Heart left ventricle (tissue), 16 donors: ENCODE measurements at regions of chr16 and their contacts with region 1.

Region 1: DNA sequence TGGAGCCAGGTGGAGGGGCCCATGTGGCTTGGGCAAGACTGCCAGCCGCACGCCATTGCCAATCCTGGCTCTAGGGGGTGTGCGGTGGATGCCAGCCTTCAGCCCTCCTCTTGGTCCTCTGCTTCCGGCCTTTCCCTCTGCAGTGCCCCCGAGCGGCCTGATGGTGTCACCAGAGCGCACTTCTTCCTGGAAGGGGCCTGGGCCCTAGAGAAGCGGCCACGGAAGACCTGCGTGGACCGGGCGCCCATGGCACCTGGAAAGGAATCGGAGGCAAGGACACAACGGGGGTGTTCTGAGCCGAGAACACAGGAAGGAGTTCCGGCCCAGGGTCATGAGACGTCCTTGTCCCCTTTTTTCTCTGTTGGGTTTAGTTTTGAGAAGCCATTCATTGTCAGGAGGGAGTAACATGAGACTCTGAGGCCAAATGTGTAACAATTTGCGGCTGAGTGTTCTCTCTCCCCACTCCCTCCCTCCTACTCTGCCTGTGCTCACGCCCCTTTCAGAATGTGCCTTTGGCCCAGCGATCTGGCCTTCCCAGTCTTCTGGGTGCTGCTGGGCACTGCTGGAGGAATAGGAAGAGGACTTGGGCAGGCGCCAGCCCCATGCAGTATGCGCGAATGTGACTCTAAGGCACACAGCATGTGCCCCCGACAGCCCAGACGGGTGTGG is 92.8 kb downstream of the IRX3 start:
- DNase-seq: peak; percentile 77 to 90 (median 84)
- ATAC-seq: peak; percentile 85 to 90 (median 89)
- H3K4me3 ChIP-seq: peak overlapping the region in 10 of 12 donors; percentile 5 to 52 (median 32)
- H3K27ac ChIP-seq: peak overlapping the region; percentile 52 to 97 (median 84)
- H3K4me1 ChIP-seq: peaks cover 0 to 19% (median 8%) of the 10 kb centered on the region in 12 donors
- H3K27me3 ChIP-seq: no peaks in the 10 kb centered on the region
- CTCF ChIP-seq: peak; percentile 75 to 95 (median 87)
- POLR2A ChIP-seq: no peak

Region 2: DNA sequence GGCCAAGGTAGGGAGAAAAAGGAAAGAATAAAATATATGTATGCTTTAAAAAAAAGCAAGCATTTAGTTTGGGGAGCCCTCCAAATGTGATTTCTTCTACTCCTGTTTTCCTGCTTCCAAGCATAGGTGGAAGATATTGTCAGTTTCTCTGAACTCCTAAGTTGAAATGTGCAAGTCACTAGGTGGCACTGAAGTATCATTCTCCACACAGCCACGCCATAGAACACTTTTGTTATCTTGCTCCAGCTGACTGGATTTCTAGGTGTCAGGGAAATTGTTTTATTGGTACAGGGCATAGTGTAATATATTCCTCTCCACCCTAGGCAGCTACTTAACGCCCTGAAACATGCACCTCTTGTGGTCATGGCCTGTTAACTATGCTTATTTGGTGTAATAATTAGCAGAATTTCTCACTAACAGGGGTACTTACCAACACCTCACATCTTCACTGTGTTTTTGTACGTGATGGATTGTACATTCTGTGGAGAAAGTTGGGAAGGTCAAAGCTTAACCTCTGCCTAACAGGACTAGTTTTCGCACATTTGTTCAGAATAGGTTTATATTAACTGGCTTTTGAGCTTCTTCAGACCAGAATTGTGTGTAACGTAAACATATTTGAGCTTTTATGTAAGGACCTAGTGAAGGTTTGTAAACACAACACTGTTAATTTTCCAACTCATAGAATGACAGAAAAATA is 420.5 kb before region 1 on chr16:
- intact Hi-C with region 1: loop called in 3 of 10 experiments (anchors 10 kb)
- DNase-seq: peak in 4 of 5 donors; percentile 21 to 35 (median 26)
- ATAC-seq: peak; percentile 84 to 94 (median 89)
- H3K4me3 ChIP-seq: no peak overlapping the region
- H3K27ac ChIP-seq: peak overlapping the region in 10 of 12 donors; percentile 17 to 66 (median 46)
- H3K4me1 ChIP-seq: peaks cover 0 to 85% (median 37%) of the 10 kb centered on the region in 12 donors
- H3K27me3 ChIP-seq: no peaks in the 10 kb centered on the region
- CTCF ChIP-seq: peak; percentile 38 to 70 (median 60)
- POLR2A ChIP-seq: no peak

Region 3: DNA sequence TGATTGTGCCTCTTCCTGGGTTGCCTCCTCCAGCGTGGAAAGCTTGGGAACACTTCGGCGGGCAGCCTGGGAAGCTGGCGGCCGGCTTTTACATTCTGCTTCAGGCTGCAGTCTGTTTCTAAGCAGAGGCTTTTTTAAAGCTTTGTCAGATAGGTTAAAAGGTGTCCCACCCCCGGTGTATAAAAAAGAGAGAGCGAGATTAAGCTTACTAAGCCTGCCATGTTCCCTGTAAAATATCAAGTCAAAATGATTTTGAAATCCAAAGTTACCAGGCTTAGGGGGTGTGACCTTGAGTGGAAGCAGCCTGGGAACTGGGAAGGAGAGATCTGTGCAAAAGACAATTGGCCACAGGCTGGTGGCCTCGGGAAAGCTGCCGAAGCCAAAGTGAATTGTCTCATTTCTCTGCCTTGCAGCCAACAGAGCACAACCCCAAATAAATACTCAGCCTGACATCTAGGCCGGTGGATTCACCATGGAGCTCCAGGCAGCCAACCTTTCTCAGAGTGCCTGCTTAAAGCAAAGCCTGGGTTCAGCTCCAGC is 235.4 kb before region 1 on chr16:
- intact Hi-C with region 1: loop called in 1 of 10 experiments (anchors 5 kb)
- DNase-seq: no peak
- ATAC-seq: peak in 3 of 4 donors; percentile 44 to 53 (median 52)
- H3K4me3 ChIP-seq: no peak overlapping the region
- H3K27ac ChIP-seq: peak overlapping the region in 10 of 12 donors; percentile 9 to 54 (median 36)
- H3K4me1 ChIP-seq: peaks cover 0 to 26% (median 3%) of the 10 kb centered on the region in 12 donors
- H3K27me3 ChIP-seq: no peaks in the 10 kb centered on the region
- CTCF ChIP-seq: no peak
- POLR2A ChIP-seq: no peak

Region 4: DNA sequence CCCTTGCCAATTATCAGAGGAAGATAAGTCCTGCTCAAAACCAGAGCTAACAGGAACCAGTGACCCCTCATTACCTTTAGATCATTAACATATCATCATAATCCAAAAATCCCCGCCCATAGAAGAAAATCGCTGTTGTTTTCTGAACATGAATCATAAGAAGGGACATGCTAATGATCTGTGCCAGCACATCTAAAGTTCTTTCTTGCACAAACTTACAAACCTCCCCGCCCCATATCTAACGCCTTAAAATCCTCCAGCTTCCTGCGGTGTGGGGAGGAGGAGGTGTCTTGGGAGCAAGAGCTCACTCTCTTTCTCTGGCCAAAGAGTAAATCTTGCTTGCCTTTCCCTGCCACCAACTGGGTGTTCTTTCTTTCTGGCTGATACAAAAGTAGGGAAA is 14.4 kb after region 1 on chr16:
- intact Hi-C with region 1: no loop called
- DNase-seq: no peak
- ATAC-seq: peak in 2 of 4 donors; percentile 29 to 43
- H3K4me3 ChIP-seq: no peak overlapping the region
- H3K27ac ChIP-seq: no peak overlapping the region
- H3K4me1 ChIP-seq: peaks cover 0 to 2% (median 0%) of the 10 kb centered on the region in 12 donors
- H3K27me3 ChIP-seq: no peaks in the 10 kb centered on the region
- CTCF ChIP-seq: no peak
- POLR2A ChIP-seq: no peak

Region 5: DNA sequence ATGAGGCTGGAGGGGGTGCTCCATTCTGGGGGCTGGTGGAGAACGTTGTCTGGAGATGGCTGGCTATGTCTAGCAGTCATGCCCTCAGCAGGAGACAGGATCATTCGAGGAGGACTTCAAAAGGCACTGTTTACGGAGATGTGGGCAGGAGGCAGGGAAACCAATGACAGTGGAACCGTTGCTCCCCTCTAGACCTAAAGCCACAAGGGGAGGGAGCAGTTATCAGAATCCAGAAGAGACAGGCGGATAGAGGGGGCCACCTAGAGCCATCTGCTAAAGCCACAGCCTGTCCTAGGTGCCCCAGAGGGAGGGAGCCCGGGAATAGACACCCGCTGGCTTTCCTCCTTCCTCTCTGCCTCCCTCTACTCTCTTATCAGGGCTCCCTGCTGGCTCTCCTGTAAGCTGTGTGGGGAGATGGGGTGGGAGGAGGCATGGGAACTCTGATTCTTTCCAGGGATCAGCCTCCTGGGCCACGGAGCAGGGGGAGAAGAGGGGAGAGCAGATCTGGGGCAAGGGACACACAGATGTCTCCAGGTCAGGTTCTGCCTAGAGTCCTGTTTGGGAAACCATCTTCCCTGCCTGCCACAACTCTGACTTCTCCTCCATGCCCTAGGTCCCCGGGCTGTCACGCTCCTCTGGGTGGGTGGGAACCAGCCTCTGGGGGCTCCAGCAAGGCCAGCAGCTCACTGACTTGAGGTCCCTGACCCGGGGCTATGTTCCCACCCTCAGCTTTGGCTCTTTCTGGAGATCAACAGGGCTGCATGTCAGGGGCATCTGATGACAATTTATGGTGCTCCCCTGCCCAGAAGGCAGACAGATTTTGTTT is 50.5 kb after region 1 on chr16:
- intact Hi-C with region 1: no loop called
- DNase-seq: no peak
- ATAC-seq: peak in 2 of 4 donors; percentile 34 to 43
- H3K4me3 ChIP-seq: no peak overlapping the region
- H3K27ac ChIP-seq: no peak overlapping the region
- H3K4me1 ChIP-seq: peaks cover 0 to 26% (median 18%) of the 10 kb centered on the region in 12 donors
- H3K27me3 ChIP-seq: no peaks in the 10 kb centered on the region
- CTCF ChIP-seq: peak in 2 of 12 donors; percentile 8 to 13
- POLR2A ChIP-seq: no peak

Region 6: DNA sequence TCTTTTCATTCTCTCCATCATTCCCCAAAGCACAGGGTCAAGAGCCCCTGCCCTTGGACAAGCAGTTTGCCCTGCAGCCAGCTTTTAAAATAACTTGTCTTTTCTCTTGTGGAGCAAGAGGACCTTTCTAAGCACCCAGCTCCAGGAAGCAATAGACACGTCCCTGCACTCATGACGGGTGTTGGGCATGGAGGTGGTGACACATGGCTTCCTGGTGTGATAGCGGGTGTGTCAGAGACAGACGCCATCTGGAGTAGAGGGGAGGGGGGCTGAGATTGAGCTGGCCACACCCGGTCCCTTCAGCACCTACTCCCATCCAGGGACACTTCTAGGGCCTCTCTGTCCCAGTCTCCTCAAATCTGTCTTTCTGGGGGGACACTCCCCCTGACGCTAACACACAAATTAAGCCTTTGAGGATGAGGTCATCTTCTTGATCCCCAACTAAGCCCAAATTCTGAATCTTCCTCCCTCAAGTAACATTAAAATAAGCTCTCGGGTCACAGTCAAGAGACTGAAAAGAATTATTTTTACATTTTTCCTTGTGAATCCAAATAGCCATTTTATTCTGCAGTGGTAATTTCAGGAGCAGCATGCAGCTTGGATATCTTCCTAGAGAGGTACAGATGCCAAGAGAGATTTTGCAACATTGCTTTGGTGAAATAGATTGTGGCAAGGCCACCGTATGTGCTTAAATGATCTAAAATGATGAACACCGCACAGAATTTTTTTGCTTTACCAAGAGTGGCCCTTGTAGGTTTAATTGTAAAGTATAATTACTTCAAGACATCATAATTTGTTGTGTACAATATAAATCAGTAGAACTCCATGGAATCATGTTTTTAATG is 309.4 kb after region 1 on chr16:
- intact Hi-C with region 1: loop called in 1 of 10 experiments (anchors 5 kb)
- DNase-seq: peak; percentile 69 to 92 (median 76)
- ATAC-seq: peak; percentile 91 to 96 (median 94)
- H3K4me3 ChIP-seq: no peak overlapping the region
- H3K27ac ChIP-seq: peak overlapping the region in 8 of 12 donors; percentile 54 to 87 (median 70)
- H3K4me1 ChIP-seq: peaks cover 0 to 65% (median 31%) of the 10 kb centered on the region in 12 donors
- H3K27me3 ChIP-seq: no peaks in the 10 kb centered on the region
- CTCF ChIP-seq: no peak
- POLR2A ChIP-seq: no peak

Region 7: GRCh38 chr16:54936979-54937670 is 743.3 kb after region 1 on chr16:
- intact Hi-C with region 1: loop called in 5 of 10 experiments (anchors 5 to 10 kb)
- DNase-seq: peak in 4 of 5 donors; percentile 48 to 69 (median 62)
- ATAC-seq: peak; percentile 25 to 74 (median 52)
- H3K4me3 ChIP-seq: peak overlapping the region; percentile 15 to 86 (median 72)
- H3K27ac ChIP-seq: peak overlapping the region; percentile 26 to 96 (median 69)
- H3K4me1 ChIP-seq: peaks cover 0 to 45% (median 22%) of the 10 kb centered on the region in 12 donors
- H3K27me3 ChIP-seq: peaks cover 12 to 98% (median 67%) of the 10 kb centered on the region in 9 donors
- CTCF ChIP-seq: peak; percentile 50 to 84 (median 66)
- POLR2A ChIP-seq: no peak